ENCODE measurements at regions of chr9 and their contacts with region 1.

Region 1: GRCh38 chr9:121621113-121621449 is 30.4 kb upstream of the DAB2IP start:
- DNase-seq: peak in 1 of 2 experiments; percentile 76
- H3K4me3 ChIP-seq: no peak overlapping the region
- H3K27ac ChIP-seq: no peak overlapping the region
- H3K4me1 ChIP-seq: no peaks in the 10 kb centered on the region
- H3K27me3 ChIP-seq: no peaks in the 10 kb centered on the region
- CTCF ChIP-seq: peak; percentile 84 to 92 (median 87)
- EP300 ChIP-seq: no peak
- POLR2A ChIP-seq: no peak
- RAD21 ChIP-seq: peak; percentile 68 to 83

Region 2: GRCh38 chr9:121326130-121326838 is 294.8 kb before region 1 on chr9:
- CTCF ChIA-PET with region 1: no interaction called
- POLR2A ChIA-PET with region 1: no interaction called
- DNase-seq: no peak
- H3K4me3 ChIP-seq: no peak overlapping the region
- H3K27ac ChIP-seq: no peak overlapping the region
- H3K4me1 ChIP-seq: no peaks in the 10 kb centered on the region
- H3K27me3 ChIP-seq: no peaks in the 10 kb centered on the region
- CTCF ChIP-seq: no peak
- EP300 ChIP-seq: no peak
- POLR2A ChIP-seq: no peak
- RAD21 ChIP-seq: no peak

Region 3: DNA sequence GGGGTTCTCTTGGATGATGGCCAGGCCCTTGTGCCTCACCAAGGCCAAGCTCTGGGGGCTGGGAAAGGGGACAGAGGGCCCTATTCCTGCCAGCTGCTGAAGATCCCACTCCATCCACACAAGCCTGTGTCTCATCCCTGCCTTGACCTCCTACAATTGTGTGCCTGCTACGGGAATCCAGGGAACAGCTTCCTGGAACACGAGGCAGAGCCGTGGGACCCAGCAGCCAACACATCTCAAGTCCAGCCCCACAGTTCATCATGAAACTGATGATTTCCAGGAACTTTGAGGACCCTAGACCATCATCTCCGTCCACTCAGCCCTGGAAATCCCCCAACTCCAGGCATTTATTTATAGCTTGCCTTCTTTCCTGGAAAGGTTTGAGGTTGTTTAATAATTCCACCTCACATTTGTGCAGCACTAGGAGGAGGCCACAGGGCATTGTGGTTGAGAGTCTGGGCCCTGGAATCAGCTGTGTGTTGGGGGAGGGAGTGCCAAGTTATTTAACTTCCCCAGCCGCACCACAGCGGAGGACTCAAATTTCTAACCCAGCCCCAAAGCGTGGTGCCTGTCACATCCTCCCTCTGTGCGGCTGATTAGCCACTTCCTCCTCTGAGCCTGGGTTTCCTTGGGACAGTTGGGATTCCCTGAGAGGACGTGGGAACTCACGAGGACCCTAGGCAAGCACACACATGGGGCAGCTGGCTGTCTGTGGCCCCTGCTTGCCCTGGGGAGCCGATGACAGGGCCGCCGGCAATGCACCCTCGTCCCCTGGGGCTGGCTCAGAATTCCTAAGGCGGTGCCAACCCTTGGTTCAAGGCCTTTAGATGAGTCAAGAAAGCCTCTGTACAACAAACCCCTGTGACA is 63.3 kb before region 1 on chr9:
- CTCF ChIA-PET with region 1: interaction called, 10 read pairs
- POLR2A ChIA-PET with region 1: no interaction called
- DNase-seq: no peak
- H3K4me3 ChIP-seq: 0 out of 8 replicates have a peak overlapping the region, but pooled peaks of 1 of the 4 experiments have one; percentile 4
- H3K27ac ChIP-seq: no peak overlapping the region
- H3K4me1 ChIP-seq: peaks cover 0 to 13% (median 9%) of the 10 kb centered on the region in 4 experiments; a peak in 5 of 7 replicates
- H3K27me3 ChIP-seq: no peaks in the 10 kb centered on the region; a peak in 1 of 7 replicates
- CTCF ChIP-seq: no peak
- EP300 ChIP-seq: no peak
- POLR2A ChIP-seq: no peak
- RAD21 ChIP-seq: no peak

Region 4: GRCh38 chr9:121581786-121582600 is 39.1 kb before region 1 on chr9:
- CTCF ChIA-PET with region 1: interaction called, 12 read pairs
- POLR2A ChIA-PET with region 1: interaction called, 3 read pairs
- DNase-seq: peak in 1 of 2 experiments; percentile 60
- H3K4me3 ChIP-seq: no peak overlapping the region
- H3K27ac ChIP-seq: no peak overlapping the region
- H3K4me1 ChIP-seq: peaks cover 0 to 16% (median 12%) of the 10 kb centered on the region in 4 experiments; a peak in 6 of 7 replicates
- H3K27me3 ChIP-seq: no peaks in the 10 kb centered on the region; a peak in 1 of 7 replicates
- CTCF ChIP-seq: no peak
- EP300 ChIP-seq: no peak
- POLR2A ChIP-seq: no peak
- RAD21 ChIP-seq: no peak

Region 5: DNA sequence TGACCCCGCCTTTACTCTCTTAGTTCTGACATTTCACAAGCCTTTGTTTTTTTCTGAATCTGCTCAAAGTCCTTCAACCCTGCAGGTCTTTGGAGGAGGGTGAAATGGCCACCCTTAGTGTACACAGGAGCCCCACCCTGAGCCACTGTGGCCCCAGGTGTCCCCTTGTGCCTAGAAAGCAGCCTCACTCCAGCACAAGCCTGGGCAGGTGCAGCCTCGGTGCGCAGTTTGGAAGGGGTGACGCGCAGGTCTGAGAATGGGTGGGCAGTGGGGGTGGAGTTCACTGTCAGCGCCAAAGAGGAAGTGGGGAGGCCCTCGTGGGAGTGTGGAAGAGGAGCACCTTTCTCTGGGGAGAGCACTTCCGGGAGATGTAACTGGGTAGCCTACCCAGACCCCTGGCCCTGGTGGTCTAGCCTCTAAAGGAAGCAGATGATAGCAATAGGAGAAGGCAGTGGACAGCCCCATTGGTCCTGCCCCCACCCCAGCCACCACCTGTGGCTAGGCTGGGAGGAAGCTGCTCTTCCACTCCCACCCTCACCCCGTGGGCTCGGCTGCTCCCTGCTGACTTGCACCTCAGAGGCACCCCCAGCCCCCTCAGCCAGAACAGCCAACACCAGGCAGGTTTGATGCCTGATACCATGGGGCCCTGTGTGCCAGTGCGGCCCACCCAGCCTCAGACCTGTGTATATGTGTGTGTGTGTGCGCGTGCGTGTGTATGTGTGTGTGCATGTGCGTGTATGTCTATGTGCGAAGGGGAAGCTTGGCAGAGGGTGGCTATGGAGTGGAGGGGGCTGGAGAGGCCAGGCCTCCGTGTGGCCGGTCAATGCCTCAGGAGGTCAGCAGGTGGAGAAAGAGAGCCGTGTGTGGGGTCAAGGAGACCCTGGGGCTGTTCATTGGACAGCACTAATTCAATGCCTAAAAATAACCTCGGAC is 13.5 kb after region 1 on chr9:
- CTCF ChIA-PET with region 1: interaction called, 76 read pairs
- POLR2A ChIA-PET with region 1: no interaction called
- DNase-seq: peak in 1 of 2 experiments; percentile 80
- H3K4me3 ChIP-seq: no peak overlapping the region
- H3K27ac ChIP-seq: no peak overlapping the region
- H3K4me1 ChIP-seq: peaks cover 0 to 16% (median 11%) of the 10 kb centered on the region in 4 experiments; a peak in 5 of 7 replicates
- H3K27me3 ChIP-seq: no peaks in the 10 kb centered on the region
- CTCF ChIP-seq: peak; percentile 84 to 90 (median 84)
- EP300 ChIP-seq: no peak
- POLR2A ChIP-seq: no peak
- RAD21 ChIP-seq: peak; percentile 87 to 88

Region 6: DNA sequence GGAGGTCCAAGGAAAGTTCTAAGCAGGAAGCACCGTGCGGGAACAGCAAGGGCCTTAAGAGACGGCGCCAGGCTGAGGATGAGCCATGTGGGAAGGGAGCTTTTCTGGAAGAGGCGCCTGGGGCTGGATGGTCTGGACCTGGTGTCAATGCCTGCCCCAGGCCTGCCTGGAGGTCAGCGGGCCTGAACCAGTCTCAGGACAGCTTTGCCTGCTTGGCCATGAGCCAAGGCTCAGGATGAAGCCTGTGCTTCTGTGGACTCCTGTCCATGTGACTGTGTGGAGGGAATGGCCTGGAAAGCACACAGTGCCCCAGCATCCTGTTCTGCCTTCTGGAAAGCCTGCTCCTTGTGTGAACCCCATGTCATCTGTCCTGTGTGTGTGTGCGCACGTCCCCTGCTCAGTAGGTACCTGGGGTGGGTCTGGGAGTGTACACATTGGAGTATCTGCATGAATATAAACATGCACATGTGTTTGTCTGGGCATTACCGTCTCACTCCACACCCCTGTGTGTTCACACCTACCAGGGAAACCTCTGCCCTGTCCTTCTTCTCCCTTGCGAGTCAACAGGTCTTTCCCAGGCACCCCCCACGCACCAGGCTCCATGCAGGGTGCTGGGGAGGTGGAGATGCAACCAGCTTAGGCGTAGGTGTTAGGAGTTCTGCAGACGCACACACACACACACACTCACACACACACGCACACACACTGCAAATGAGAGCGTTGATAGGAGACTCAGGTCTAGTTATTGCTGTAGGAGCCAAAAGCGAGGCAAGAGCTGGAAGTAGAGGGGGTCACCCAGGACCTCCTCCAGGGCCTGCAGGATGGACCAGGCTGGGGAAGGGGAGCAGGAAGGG is 55.1 kb after region 1 on chr9:
- CTCF ChIA-PET with region 1: interaction called, 11 read pairs
- POLR2A ChIA-PET with region 1: no interaction called
- DNase-seq: no peak
- H3K4me3 ChIP-seq: no peak overlapping the region
- H3K27ac ChIP-seq: no peak overlapping the region
- H3K4me1 ChIP-seq: peaks cover 3 to 11% (median 8%) of the 10 kb centered on the region in 4 experiments
- H3K27me3 ChIP-seq: no peaks in the 10 kb centered on the region
- CTCF ChIP-seq: no peak
- EP300 ChIP-seq: no peak
- POLR2A ChIP-seq: no peak
- RAD21 ChIP-seq: no peak

Region 7: GRCh38 chr9:121698627-121699570 is 77.8 kb after region 1 on chr9:
- CTCF ChIA-PET with region 1: interaction called, 19 read pairs
- POLR2A ChIA-PET with region 1: no interaction called
- DNase-seq: peak in 1 of 2 experiments; percentile 86
- H3K4me3 ChIP-seq: peak overlapping the region; percentile 54 to 68 (median 61)
- H3K27ac ChIP-seq: no peak overlapping the region
- H3K4me1 ChIP-seq: peaks cover 4 to 13% (median 12%) of the 10 kb centered on the region in 4 experiments
- H3K27me3 ChIP-seq: peaks cover 0 to 5% (median 0%) of the 10 kb centered on the region in 4 experiments; a peak in 4 of 7 replicates
- CTCF ChIP-seq: no peak
- EP300 ChIP-seq: no peak
- POLR2A ChIP-seq: no peak
- RAD21 ChIP-seq: no peak